ENCODE measurements at regions of chr1 and their contacts with region 1.

Region 1: DNA sequence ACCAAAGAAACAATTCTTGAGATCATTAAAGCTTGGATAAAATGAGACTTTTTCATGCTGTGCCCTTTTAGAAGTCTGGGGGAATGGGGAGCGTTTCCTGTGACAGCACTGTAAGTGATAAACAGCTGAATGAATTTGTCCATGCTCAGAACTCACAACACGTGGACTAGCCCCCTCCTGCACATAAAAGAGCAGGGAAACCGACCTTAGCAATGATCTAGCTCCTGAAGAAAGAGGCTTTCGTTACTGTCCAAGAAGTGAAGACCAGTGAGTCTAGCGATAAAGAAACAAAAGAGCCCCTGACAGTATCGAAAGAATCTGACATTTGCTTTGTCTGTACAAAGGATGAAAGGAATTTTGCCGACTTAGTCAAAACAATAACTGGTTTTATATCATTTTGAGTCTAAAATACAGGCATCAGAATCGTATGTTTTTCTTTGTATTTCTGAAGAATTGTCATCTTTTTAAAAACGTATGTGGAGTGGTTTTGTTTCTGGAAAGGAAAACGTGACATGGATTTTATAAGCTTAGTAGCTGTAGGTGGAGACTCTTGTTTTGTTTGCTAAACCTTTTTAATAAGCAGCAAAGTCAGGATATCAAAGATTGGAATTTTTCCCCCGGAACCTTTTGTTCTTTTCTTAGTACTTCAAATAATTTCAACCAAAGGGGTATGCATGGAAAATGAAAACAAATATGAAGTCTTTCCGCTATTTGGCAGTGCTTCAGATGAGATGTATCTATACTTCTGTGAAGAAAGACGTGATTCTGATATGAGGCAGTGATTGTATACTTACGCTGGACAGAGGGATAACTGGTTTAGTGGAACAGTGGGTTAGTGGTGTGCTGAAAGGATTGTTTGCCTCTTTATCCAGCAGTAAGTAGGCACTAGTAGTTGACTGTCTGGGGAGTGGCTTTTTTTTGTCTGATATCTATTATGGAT is 61.0 kb downstream of the MAST2 start:
- DNase-seq: no peak
- H3K4me3 ChIP-seq: peak overlapping the region in 3 of 8 donors; percentile 7 to 24 (median 9)
- H3K27ac ChIP-seq: no peak overlapping the region
- H3K4me1 ChIP-seq: peaks cover 0 to 7% (median 0%) of the 10 kb centered on the region in 6 donors
- H3K27me3 ChIP-seq: no peaks in the 10 kb centered on the region
- CTCF ChIP-seq: no peak
- POLR2A ChIP-seq: no peak

Region 2: GRCh38 chr1:45518910-45519309 is 345.5 kb before region 1 on chr1:
- intact Hi-C with region 1: loop called (anchors 5 kb)
- DNase-seq: no peak
- H3K4me3 ChIP-seq: peak overlapping the region in 3 of 8 donors; percentile 5 to 80 (median 23)
- H3K27ac ChIP-seq: peak overlapping the region in 6 of 8 donors; percentile 2 to 91 (median 33)
- H3K4me1 ChIP-seq: peaks cover 14 to 52% (median 28%) of the 10 kb centered on the region in 6 donors
- H3K27me3 ChIP-seq: no peaks in the 10 kb centered on the region
- CTCF ChIP-seq: no peak
- POLR2A ChIP-seq: no peak

Region 3: GRCh38 chr1:46247436-46248121 is 383.1 kb after region 1 on chr1 and contains the start of gene RAD54L:
- intact Hi-C with region 1: no loop called
- DNase-seq: peak; percentile 98
- H3K4me3 ChIP-seq: peak within 1 kb of the TSS; percentile 57 to 88 (median 69)
- H3K27ac ChIP-seq: peak within 1 kb of the TSS in 7 of 8 donors; percentile 11 to 79 (median 72)
- H3K4me1 ChIP-seq: peaks cover 0 to 24% (median 18%) of the 10 kb centered on the region in 6 donors
- H3K27me3 ChIP-seq: no peaks in the 10 kb centered on the region
- CTCF ChIP-seq: no peak
- POLR2A ChIP-seq: no peak
- total RNA-seq, gene RAD54L: 2.4 to 9.2 (median 2.9) TPM